Dorsolateral prefrontal cortex (tissue), 120 donors: ENCODE measurements at regions of chr10 and their contacts with region 1.

Region 1: DNA sequence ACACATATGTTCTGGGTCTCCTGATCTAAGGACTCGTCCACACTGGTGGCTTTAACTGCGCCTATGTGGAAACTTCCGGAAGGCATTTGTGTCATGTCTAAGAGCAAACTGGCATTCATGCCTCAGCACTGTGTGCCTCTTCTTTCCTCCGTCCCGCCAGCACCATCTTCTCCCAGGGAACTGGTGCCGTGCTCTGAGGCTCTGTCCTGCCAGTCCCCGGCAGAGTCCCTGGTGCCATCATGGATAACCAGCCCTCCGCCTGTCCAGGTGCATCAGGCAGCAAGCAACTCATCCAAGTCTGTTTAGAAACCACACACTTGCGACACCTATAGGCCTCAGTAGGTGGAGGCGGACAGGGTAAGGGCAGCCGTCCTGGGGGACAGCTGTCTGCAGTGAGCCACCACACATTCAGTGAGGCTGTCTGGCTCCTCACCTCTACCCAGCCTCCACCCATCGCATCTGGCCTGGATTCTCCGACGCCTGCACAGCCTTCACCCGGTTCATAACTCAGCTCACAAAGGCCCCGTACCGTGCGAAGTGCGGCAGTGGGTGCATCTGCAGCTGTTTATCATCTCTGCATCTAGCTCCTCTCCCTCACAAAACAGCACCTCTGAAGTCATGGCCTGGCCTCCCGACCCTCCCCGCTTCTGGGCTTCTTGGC is 162.7 kb downstream of the DIP2C start:
- DNase-seq: peak in 4 of 10 donors; percentile 24 to 39 (median 28)
- H3K4me3 ChIP-seq: no peak overlapping the region
- H3K27ac ChIP-seq: peak overlapping the region in 1 of 59 donors; percentile 27
- H3K27me3 ChIP-seq: no peaks in the 10 kb centered on the region
- CTCF ChIP-seq: no peak

Region 2: GRCh38 chr10:571688-572451 is 45.1 kb after region 1 on chr10:
- intact Hi-C with region 1: loop called in 1 of 2 experiments (anchors 5 kb)
- DNase-seq: no peak
- H3K4me3 ChIP-seq: no peak overlapping the region
- H3K27ac ChIP-seq: no peak overlapping the region
- H3K27me3 ChIP-seq: no peaks in the 10 kb centered on the region
- CTCF ChIP-seq: no peak

Region 3: GRCh38 chr10:598415-599170 is 71.8 kb after region 1 on chr10:
- intact Hi-C with region 1: no loop called
- DNase-seq: peak in 2 of 10 donors; percentile 13 to 19
- H3K4me3 ChIP-seq: no peak overlapping the region
- H3K27ac ChIP-seq: peak overlapping the region in 1 of 59 donors; percentile 35
- H3K27me3 ChIP-seq: no peaks in the 10 kb centered on the region
- CTCF ChIP-seq: no peak